Activated naive CD4-positive, alpha-beta T cell treated with anti-CD3 and anti-CD28 coated beads for 36 hours (primary cell): ENCODE measurements at regions of chr1 and their contacts with region 1.

Region 1: GRCh38 chr1:158983225-158983624 is 26.5 kb upstream of the IFI16 start:
- DNase-seq: no peak
- H3K4me3 Mint-ChIP-seq: no peak overlapping the region
- H3K27ac Mint-ChIP-seq: no peak overlapping the region
- H3K4me1 Mint-ChIP-seq: peaks cover 7% of the 10 kb centered on the region
- H3K27me3 Mint-ChIP-seq: peaks cover 3% of the 10 kb centered on the region

Region 2: DNA sequence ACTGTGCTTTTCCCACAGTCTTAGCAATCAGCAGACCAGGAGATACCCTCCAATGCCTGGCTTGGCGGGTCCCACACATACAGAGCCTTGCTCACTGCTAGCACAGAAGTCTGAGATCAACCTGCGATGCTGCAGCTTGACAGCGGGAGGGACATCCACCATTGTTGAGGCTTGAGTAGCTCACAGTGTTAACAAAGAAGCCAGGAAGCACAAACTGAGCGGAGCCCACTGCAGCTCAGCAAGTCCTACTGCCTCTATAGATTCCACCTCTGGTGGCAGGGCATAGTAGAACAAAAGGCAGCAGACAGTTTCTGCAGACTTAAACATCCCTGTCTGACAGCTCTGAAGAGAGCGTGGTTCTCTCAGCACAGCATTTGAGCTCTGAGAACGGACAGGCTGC is 118.6 kb before region 1 on chr1:
- CTCF ChIA-PET with region 1: no interaction called
- intact Hi-C with region 1: no loop called
- DNase-seq: no peak
- H3K4me3 Mint-ChIP-seq: no peak overlapping the region
- H3K27ac Mint-ChIP-seq: no peak overlapping the region
- H3K4me1 Mint-ChIP-seq: no peaks in the 10 kb centered on the region
- H3K27me3 Mint-ChIP-seq: peaks cover 29% of the 10 kb centered on the region

Region 3: DNA sequence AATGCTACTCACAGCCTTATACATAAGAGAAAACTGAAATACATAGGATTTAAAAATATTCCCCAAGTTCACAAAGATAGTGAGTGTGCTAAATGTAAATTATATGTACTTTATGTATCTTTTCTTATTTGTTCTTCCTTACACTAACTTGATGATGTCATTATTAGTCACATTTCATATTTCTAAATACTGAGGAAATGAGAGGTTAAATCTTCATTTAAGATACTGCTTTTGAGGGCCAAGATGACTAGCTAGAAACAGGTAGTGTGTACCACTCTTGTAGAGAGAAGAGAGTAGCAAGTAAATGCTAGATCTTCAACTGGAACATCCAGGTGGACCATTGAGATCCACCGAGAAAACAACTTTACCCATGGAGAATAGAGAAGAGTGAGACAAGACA is 22.0 kb before region 1 on chr1:
- CTCF ChIA-PET with region 1: interaction called, 4 read pairs
- intact Hi-C with region 1: loop called (anchors 2 kb)
- DNase-seq: no peak
- H3K4me3 Mint-ChIP-seq: no peak overlapping the region
- H3K27ac Mint-ChIP-seq: no peak overlapping the region
- H3K4me1 Mint-ChIP-seq: peaks cover 6% of the 10 kb centered on the region
- H3K27me3 Mint-ChIP-seq: peaks cover 3% of the 10 kb centered on the region

Region 4: DNA sequence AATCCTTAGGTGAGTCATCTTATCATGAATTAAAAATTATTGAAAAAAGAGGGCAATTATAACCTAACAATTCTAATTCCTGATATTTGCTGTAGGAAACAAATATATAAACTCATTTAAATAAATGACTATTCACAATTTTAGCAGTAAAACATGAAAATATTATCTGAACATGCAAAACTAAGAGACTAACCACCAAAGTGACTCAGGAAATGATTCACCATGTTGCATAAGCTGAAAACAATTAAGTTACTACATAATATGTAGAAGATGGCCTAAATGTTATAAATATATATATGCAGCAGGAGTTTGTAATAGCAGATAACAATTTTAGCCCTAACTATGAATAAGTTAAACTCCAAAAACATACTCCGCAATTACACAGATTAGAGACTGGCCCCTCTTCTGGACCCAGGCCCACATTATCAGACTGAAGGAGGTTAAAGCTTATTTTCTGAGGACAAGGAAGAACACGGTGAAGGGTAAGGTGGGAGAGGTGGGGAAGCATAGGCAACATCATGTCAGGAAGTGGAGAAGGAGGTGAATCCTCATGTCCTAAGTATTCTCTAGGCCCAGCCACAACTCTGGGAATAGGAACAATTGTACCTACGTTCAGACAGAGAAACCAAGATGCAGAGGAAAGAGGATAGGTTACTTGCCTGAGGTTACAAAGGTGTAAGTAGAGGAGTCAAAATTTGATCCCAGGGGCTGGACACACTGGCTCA is 109.0 kb after region 1 on chr1:
- CTCF ChIA-PET with region 1: no interaction called
- intact Hi-C with region 1: no loop called
- DNase-seq: no peak
- H3K4me3 Mint-ChIP-seq: no peak overlapping the region
- H3K27ac Mint-ChIP-seq: no peak overlapping the region
- H3K4me1 Mint-ChIP-seq: peaks cover 47% of the 10 kb centered on the region
- H3K27me3 Mint-ChIP-seq: no peaks in the 10 kb centered on the region